ENCODE measurements at regions of chr22 and their contacts with region 1.

Region 1: DNA sequence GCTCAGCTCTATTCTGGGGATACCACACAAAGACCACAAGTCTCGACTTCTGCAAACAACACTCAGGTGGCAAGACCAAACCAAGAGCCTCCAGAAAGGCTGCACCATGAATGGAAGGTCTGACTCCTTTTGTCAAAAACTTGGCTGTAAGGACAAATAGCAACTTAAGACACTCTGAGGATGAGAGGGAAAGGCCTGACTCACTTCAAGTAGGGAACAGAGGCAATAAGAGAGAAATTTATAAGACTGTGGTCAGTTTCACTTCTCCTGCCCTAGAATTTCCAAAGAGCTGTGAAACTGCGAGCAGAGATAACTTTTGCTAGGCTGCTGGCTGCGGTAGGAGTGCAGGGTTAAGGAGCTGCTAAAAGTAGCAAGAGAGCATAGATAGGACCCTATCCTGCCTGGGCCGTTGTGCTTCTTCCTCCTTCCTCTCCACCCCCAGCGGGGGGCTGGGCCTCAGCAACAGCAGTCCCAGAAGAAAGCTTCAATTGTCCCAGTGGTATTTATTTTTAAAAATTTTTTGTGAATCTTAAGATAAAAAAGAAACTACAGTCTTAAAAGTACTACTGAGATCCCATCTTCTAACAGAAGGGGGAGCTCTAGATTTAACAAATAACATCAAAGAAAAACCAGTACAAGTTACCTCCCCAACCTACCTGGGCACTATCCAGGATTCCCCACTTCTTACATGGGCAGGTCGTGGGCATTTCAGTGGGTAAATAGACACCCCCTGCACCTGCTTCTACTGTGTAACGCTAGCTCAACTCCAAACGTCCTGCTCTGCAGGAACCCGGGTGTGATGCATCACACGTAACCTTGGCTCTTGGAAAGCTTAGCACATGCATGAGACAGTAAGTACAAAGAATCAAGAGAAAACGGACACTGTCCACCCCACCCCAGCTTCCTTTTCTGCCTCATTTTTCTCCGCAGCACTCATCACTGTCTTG is 66.4 kb downstream of the SGSM3 start:
- DNase-seq: peak; percentile 41
- ATAC-seq: peak; percentile 61
- H3K4me3 ChIP-seq: no peak overlapping the region
- H3K27ac ChIP-seq: no peak overlapping the region
- H3K4me1 ChIP-seq: peaks cover 16% of the 10 kb centered on the region
- H3K27me3 ChIP-seq: no peaks in the 10 kb centered on the region
- CTCF ChIP-seq: peak; percentile 58
- EP300 ChIP-seq: no peak
- POLR2A ChIP-seq: no peak
- RAD21 ChIP-seq: peak; percentile 59; the same call in 1 of the 2 replicates

Region 2: GRCh38 chr22:39710380-39711150 is 726.2 kb before region 1 on chr22:
- CTCF ChIA-PET with region 1: no interaction called
- POLR2A ChIA-PET with region 1: no interaction called
- in situ Hi-C with region 1: no loop called
- intact Hi-C with region 1: no loop called
- DNase-seq: no peak
- ATAC-seq: no peak
- H3K4me3 ChIP-seq: no peak overlapping the region
- H3K27ac ChIP-seq: no peak overlapping the region
- H3K4me1 ChIP-seq: peaks cover 12% of the 10 kb centered on the region
- H3K27me3 ChIP-seq: peaks cover 8 to 69% of the 10 kb centered on the region in 2 experiments; a peak in 4 of 5 replicates
- CTCF ChIP-seq: no peak
- EP300 ChIP-seq: no peak
- POLR2A ChIP-seq: no peak
- RAD21 ChIP-seq: no peak

Region 3: DNA sequence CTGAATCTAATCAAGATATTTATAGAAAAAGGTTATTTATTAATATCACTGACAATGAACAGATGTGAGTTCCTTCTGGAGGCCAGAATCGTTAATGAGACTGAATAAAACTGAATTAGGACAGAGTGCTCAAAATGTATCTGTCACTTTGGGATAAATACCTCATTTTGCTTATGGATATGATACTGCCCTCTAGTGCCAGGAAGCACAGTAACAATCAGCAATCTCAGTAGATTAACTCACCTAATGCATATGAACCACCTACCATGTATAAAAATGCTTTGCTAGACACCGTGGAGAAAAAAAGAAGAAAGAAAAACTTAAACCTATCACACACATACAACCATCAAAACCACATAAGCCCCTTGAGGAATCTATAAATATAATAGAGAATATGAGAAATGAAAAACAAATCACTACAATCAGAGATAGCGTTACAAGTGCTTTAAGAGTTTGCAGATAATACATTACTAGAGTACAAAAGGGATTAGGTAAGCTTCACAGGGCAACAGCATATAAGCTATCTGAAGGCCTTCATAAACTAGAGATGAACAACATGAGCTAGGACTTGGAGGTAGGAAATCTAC is 51.0 kb after region 1 on chr22:
- CTCF ChIA-PET with region 1: interaction called, 16 read pairs
- POLR2A ChIA-PET with region 1: no interaction called
- in situ Hi-C with region 1: loop called (anchors 5 kb)
- intact Hi-C with region 1: loop called (anchors 2 kb)
- DNase-seq: peak; percentile 17
- ATAC-seq: peak; percentile 50; the same call in 2 of the 3 replicates
- H3K4me3 ChIP-seq: no peak overlapping the region
- H3K27ac ChIP-seq: no peak overlapping the region
- H3K4me1 ChIP-seq: peaks cover 14% of the 10 kb centered on the region
- H3K27me3 ChIP-seq: no peaks in the 10 kb centered on the region
- CTCF ChIP-seq: peak; percentile 67
- EP300 ChIP-seq: no peak
- POLR2A ChIP-seq: no peak
- RAD21 ChIP-seq: 0 out of 2 replicates have a peak, but pooled peaks have one; percentile 12

Region 4: GRCh38 chr22:40533712-40534378 is 97.1 kb after region 1 on chr22:
- CTCF ChIA-PET with region 1: no interaction called
- POLR2A ChIA-PET with region 1: no interaction called
- in situ Hi-C with region 1: no loop called
- intact Hi-C with region 1: loop called (anchors 5 kb)
- DNase-seq: no peak
- ATAC-seq: no peak
- H3K4me3 ChIP-seq: no peak overlapping the region
- H3K27ac ChIP-seq: no peak overlapping the region
- H3K4me1 ChIP-seq: peaks cover 28% of the 10 kb centered on the region
- H3K27me3 ChIP-seq: no peaks in the 10 kb centered on the region
- CTCF ChIP-seq: no peak
- EP300 ChIP-seq: no peak
- POLR2A ChIP-seq: no peak
- RAD21 ChIP-seq: no peak

Region 5: DNA sequence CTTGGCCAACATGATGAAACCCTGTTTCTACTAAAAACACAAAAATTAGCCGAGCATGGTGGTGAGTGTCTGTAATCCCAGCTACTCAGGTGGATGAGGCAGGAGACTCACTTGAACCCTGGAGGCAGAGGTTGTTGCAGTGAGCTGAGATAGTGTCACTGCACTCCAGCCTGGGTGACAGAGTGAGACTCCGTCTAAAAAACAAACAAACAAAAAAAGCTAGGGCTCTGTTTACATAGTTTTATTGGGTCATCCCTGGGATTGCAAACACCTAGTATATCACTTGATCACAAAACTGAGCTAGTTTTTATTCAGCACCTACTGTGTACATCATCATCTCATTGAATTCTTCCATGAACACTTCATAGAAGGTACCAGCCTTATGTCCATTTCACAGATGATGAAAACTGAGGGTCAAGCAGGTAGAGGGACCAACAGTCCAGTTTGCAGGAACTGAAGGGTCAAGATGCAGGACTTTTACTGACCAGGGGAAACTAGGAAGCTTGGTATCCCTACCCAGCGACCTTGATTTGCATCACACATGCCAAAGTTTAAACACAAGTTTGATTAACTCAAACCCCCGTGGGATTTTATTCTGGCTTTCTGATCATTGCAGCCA is 208.9 kb after region 1 on chr22:
- CTCF ChIA-PET with region 1: interaction called, 32 read pairs
- POLR2A ChIA-PET with region 1: interaction called, 21 read pairs
- in situ Hi-C with region 1: loop called (anchors 5 kb)
- intact Hi-C with region 1: loop called (anchors 1 kb)
- DNase-seq: no peak
- ATAC-seq: no peak
- H3K4me3 ChIP-seq: peak overlapping the region in 1 of 3 experiments; percentile 47; a peak in 1 of 6 replicates
- H3K27ac ChIP-seq: peak overlapping the region; percentile 79
- H3K4me1 ChIP-seq: peaks cover 28% of the 10 kb centered on the region
- H3K27me3 ChIP-seq: no peaks in the 10 kb centered on the region
- CTCF ChIP-seq: no peak
- EP300 ChIP-seq: no peak
- POLR2A ChIP-seq: no peak
- RAD21 ChIP-seq: no peak

Region 6: DNA sequence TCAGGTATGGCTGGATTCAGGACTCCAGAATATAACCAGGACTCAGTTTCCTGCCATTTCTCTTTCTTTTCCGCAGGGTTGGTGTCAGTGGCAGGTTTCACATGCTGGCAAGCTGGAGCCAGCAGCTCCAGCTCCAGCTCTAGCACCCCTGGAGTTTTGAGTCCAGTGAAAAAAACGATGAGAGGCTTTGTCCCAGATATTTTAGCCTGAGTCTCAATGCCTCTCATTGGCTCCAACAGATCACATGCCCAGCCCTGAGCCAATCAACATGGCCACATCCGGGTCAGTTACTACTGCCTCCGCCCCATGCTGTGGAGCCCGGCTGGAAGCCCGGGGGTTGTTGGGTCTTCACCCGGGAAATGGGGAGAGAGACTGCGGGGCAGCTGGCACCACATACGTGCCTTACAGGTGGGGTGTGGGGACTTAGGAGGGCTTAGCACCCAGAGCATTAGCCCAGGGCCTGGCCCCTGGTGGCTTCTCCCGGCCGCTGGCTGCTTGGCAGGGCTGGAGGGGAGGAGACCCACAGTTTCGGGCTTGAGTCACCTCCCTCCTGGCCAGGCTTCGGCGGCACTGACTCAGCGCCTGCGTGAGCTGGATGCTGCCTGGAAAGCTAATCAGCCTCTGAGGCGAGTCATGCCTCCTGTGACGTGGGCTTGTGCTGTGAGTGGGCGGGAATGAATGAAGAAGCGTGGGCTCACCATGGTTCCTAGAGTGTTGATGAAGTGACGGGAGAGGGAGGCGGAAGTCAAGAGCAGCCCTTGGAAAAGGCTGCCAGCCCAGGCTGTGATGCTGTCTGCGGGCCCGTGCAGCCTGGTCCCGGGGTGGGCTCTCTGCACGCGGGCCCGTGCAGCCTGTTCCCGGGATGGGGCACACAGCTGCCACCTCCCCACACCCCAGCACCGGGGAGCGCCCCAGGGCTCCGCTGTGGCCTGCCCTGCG is 215.1 kb after region 1 on chr22:
- CTCF ChIA-PET with region 1: interaction called, 32 read pairs
- POLR2A ChIA-PET with region 1: interaction called, 21 read pairs
- in situ Hi-C with region 1: loop called (anchors 5 kb)
- intact Hi-C with region 1: no loop called
- DNase-seq: peak; percentile 95
- ATAC-seq: peak; percentile 96
- H3K4me3 ChIP-seq: peak overlapping the region; percentile 68 to 90 (median 74)
- H3K27ac ChIP-seq: peak overlapping the region; percentile 87
- H3K4me1 ChIP-seq: peaks cover 45% of the 10 kb centered on the region
- H3K27me3 ChIP-seq: no peaks in the 10 kb centered on the region; a peak in 1 of 5 replicates
- CTCF ChIP-seq: no peak
- EP300 ChIP-seq: no peak
- POLR2A ChIP-seq: peak; percentile 85 to 91
- RAD21 ChIP-seq: 0 out of 2 replicates have a peak, but pooled peaks have one; percentile 6

Measured in HepG2 (cell line).